ENCODE measurements at regions of chr18 and their contacts with region 1.

Region 1: DNA sequence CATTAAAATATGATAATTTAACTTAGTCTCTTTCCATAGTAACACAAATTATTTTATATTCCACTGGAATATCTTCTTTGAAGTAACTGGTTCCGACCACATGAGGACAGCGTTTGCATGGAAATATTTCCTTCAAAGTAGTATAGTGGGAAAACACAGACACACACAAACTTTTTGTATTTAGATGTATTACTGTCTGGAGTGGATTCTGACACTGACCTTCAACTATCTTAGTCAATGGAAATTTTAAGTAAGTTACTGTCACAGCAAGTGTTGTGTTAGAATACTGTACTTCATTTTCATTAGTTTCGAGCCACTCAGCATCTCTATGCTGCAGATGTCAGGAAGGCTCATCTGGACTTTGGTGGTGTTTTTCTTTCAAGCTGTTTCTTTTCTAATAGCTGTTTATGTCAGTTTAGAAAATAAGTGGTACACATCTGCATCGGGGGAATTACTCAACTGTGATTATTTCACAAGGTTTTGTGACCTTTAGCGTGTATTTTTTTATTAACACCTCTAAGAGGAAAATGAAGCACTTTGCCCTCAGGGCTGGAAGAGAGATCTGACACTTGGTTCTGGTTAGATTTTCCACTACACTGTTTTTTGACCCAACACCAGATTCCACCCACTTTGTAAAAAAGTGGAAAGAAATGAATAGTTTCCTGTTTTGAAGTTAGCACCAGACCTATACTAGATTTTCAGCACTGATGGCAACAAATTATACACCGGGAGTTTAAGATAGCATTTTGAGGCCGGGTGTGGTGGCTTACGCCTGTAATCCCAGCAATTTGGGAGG is 18.9 kb upstream of the THOC1 start:
- DNase-seq: no peak
- H3K4me3 ChIP-seq: no peak overlapping the region
- H3K27ac ChIP-seq: no peak overlapping the region
- H3K4me1 ChIP-seq: no peaks in the 10 kb centered on the region
- H3K27me3 ChIP-seq: peaks cover 0 to 3% of the 10 kb centered on the region in 2 donors
- CTCF ChIP-seq: peak; percentile 44 to 53

Region 2: DNA sequence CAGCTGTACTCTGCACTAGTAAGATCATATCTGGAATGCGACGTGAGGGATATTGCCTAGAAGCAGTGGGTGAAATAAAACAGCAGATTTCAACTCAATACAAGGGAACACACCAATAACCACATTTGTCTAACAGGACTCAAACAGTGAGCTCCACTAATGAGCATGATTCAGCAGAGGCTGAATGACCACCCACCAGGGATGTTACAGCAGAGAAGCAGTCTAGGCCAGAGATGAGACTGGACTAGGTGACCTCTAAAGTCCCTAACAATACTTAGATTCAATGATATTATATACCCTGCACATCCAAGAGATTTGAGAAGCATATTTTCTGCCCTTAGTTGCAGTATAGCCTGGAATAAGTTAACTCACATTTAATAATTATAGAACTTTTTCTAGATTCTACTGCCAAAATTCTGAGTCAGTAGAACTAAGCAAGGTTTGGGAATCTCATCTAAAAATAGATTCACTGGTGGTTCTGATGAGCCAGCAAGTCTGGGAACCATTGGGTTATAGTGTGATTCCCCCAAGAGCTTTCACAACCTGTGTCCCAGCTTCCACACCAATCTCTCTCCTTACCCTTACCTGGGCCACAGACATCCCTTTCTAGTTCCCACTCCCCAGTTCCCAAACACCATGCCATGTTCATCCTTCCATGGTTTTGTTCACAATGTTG is 25.2 kb before region 1 on chr18:
- intact Hi-C with region 1: no loop called
- DNase-seq: no peak
- H3K4me3 ChIP-seq: no peak overlapping the region
- H3K27ac ChIP-seq: no peak overlapping the region
- H3K4me1 ChIP-seq: peaks cover 0 to 9% (median 4%) of the 10 kb centered on the region in 4 donors
- H3K27me3 ChIP-seq: no peaks in the 10 kb centered on the region
- CTCF ChIP-seq: no peak

Region 3: DNA sequence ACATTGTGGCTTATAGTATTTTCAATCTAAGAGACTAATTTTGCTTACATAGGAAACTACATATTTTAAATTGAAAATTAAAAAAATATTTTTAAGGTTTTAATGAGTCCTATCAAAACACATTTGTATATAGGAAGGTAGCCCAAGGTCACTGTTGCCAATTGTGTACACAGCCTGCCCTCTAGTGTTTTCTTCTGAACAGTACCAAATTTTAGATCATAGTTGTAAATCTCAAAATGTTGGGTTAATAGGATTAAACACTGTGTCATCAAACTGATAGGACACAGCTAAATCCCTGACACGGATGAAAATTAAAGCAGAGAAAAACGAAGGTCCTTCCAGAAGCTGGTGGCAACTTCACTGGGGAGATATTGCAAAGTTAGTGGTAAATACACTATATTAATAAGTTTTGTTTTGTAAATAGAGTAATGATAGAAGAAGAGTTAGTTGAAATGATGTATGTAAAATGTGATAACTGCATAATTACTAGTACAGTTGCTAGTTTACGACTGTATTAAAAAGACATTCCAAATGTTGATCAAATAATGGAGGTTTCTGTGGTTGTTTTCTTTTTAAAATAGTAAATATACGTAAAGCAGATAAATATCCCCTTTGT is 329.8 kb after region 1 on chr18:
- intact Hi-C with region 1: loop called (anchors 10 kb)
- DNase-seq: no peak
- H3K4me3 ChIP-seq: no peak overlapping the region
- H3K27ac ChIP-seq: no peak overlapping the region
- H3K4me1 ChIP-seq: no peaks in the 10 kb centered on the region
- H3K27me3 ChIP-seq: no peaks in the 10 kb centered on the region
- CTCF ChIP-seq: peak; percentile 66 to 74

Region 4: DNA sequence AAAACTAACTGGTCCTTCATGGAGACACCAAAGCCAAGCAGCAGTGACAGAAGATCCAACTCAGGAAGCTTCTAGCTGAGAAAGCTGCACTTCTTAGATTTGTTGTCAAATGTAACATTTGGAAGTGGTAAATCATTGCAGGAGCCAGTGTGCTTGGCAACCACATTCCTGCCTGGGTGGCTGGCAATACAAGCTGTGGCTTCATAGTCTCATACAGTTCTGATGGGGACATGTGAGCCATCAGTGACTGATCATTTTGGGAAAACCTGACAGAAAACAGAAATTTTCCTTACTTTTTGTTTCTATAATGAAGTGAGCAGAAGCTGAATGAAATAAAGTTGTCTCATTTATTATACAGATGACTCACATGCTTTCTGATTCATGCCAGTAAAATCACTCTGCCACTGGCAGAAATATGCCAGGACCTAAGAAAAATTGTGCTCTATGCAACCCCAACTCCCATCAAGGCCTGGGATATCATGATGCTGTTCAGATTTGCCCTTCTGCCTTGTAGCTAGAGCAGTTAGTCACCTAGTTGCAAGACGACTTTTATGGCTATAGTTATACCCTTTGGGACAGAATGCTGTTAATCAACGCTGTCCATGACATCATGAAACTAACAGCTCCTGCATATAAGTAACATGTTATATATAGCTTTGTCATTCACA is 1126.1 kb after region 1 on chr18:
- intact Hi-C with region 1: no loop called
- DNase-seq: no peak
- H3K4me3 ChIP-seq: no peak overlapping the region
- H3K27ac ChIP-seq: no peak overlapping the region
- H3K4me1 ChIP-seq: no peaks in the 10 kb centered on the region
- H3K27me3 ChIP-seq: no peaks in the 10 kb centered on the region
- CTCF ChIP-seq: no peak

Measured in tibial artery (tissue), 4 donors.